Activated CD4-positive, alpha-beta memory T cell treated with anti-CD3 and anti-CD28 coated beads for 36 hours (primary cell): ENCODE measurements at regions of chr19 and their contacts with region 1.

Region 1: DNA sequence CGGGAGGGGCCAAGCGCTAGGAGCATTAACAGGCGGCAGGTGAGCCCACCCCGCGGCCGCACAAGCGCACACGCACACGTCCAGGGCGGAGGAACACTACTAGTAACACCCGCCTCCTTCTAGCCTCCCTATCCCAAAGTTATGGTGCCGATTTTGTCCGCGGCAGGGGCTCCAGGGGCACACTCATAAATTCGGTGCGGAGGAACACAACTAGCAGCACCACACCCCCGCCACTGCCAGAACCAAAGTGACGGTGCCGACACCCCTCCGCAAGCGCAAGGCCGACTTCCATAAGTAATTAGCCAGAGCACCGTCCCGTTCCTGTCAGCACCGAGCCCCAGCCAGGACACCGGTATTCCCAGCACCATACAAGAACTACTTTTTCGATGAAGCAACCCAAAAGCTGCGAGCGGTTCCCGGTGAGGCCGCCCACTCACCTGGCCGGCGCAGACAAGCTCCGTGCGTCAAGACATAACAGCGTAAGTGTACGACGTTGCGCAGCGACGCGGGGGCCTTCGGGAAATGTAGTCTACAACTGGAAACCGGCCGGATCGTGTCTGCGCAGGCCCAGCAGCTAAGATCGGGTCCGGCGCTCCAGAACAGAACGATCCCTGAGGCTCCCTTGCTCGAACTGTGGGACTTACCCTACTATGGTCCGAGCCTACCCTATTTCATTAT is at the starts of genes ZNF540 and ZNF571:
- DNase-seq: peak; percentile 96
- H3K4me3 Mint-ChIP-seq: peak within 1 kb of the TSS; percentile 86
- H3K27ac Mint-ChIP-seq: peak within 1 kb of the TSS; percentile 100
- H3K4me1 Mint-ChIP-seq: peaks cover 31% of the 10 kb centered on the region
- H3K27me3 Mint-ChIP-seq: no peaks in the 10 kb centered on the region
- total RNA-seq, gene ZNF540: 0.86 to 1.1 TPM
- total RNA-seq, gene ZNF571: 2.7 to 4.0 TPM

Region 2: GRCh38 chr19:36378625-36379509 is 1215.6 kb before region 1 on chr19 and contains the start of gene ZFP14:
- CTCF ChIA-PET with region 1: no interaction called
- POLR2A ChIA-PET with region 1: no interaction called
- intact Hi-C with region 1: loop called (anchors 5 kb)
- DNase-seq: peak; percentile 97
- H3K4me3 Mint-ChIP-seq: peak within 1 kb of the TSS; percentile 91
- H3K27ac Mint-ChIP-seq: peak within 1 kb of the TSS; percentile 86
- H3K4me1 Mint-ChIP-seq: peaks cover 10% of the 10 kb centered on the region
- H3K27me3 Mint-ChIP-seq: no peaks in the 10 kb centered on the region
- total RNA-seq, gene ZFP14: 1.6 to 2.3 TPM

Region 3: GRCh38 chr19:36973021-36973843 is 621.2 kb before region 1 on chr19:
- CTCF ChIA-PET with region 1: interaction called, 3 read pairs
- POLR2A ChIA-PET with region 1: no interaction called
- intact Hi-C with region 1: loop called (anchors 2 kb)
- DNase-seq: peak; percentile 91
- H3K4me3 Mint-ChIP-seq: peak overlapping the region; percentile 89
- H3K27ac Mint-ChIP-seq: peak overlapping the region; percentile 95
- H3K4me1 Mint-ChIP-seq: peaks cover 7% of the 10 kb centered on the region
- H3K27me3 Mint-ChIP-seq: no peaks in the 10 kb centered on the region

Region 4: DNA sequence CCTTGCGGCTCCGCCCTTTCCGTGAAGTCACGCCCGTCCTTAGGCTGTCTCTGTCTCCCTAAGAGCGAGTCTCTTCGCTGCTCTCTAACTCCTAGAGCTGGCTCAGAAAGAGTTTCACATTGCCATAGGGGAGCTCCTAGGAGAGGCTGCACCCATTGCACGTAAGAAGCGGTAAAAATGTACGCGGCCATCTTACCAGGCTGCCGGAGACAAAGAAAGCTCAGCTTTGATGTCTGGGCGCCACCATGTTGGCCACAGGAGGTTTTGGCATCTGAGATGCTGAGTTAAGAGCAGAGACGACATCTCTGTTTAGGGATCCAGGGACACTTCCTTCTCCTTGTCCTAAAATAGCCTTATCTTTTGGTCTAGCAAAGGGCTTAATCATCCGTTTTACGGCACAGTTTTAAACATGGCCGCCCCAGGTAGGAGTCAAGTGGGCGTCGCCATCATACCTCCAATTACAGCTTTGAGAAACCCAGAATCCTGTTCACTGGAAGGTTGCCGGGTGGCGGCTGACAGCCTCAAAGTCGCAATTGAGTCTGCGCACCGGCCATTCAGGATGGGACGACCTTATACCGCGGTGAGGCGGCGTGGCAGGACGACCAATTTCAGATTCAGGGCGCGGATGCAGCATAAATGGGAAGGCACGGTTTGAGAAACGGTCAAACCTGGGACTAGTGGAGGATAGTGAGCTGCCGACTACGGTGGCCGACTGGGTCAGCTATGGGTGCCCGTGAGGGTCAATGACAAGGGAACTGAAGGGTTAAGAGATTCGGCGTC is 87.9 kb before region 1 on chr19 and contains the start of gene ZNF793:
- CTCF ChIA-PET with region 1: interaction called, 4 read pairs
- POLR2A ChIA-PET with region 1: interaction called, 9 read pairs
- intact Hi-C with region 1: loop called (anchors 1 kb)
- DNase-seq: peak; percentile 86
- H3K4me3 Mint-ChIP-seq: no peak within 1 kb of the TSS
- H3K27ac Mint-ChIP-seq: no peak within 1 kb of the TSS
- H3K4me1 Mint-ChIP-seq: no peaks in the 10 kb centered on the region
- H3K27me3 Mint-ChIP-seq: no peaks in the 10 kb centered on the region
- total RNA-seq, gene ZNF793: 2.4 to 3.4 TPM

Region 5: DNA sequence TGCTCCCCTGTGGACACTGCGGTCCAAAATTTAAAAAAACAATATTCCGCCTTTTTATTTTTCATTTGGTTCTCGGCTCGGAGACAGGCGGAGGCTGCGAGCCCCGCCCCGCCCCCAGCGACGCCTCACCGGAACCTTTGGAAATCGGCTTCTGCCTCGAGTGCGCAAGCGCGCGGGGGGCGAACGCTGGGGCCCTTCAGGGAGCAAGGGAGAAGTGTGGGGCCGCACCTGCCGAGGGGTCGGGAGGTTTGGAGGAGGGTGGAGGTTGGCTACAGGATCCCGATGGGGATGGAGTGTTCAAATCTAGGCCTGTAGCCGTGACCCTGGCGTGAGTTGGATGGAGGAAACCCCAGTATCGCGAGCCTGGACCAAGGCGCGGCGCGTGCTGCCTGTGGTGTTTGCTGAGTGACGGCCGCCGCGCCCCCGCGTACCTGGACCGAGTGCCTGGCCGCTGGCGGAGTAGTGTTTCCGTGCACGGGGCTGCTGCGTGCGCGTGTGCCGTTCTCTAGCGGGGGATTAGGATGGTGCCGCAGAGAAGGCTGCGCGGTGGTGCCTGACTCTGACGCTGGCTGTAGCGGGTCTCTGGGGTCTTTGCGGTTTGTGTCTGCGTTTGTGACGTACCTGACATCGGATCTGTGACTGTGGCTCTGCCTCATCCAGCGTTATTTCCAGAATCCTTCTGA is 61.4 kb after region 1 on chr19:
- CTCF ChIA-PET with region 1: interaction called, 5 read pairs
- POLR2A ChIA-PET with region 1: interaction called, 4 read pairs
- intact Hi-C with region 1: loop called (anchors 1 kb)
- DNase-seq: peak; percentile 90
- H3K4me3 Mint-ChIP-seq: peak overlapping the region; percentile 91
- H3K27ac Mint-ChIP-seq: peak overlapping the region; percentile 95
- H3K4me1 Mint-ChIP-seq: peaks cover 27% of the 10 kb centered on the region
- H3K27me3 Mint-ChIP-seq: no peaks in the 10 kb centered on the region

Region 6: DNA sequence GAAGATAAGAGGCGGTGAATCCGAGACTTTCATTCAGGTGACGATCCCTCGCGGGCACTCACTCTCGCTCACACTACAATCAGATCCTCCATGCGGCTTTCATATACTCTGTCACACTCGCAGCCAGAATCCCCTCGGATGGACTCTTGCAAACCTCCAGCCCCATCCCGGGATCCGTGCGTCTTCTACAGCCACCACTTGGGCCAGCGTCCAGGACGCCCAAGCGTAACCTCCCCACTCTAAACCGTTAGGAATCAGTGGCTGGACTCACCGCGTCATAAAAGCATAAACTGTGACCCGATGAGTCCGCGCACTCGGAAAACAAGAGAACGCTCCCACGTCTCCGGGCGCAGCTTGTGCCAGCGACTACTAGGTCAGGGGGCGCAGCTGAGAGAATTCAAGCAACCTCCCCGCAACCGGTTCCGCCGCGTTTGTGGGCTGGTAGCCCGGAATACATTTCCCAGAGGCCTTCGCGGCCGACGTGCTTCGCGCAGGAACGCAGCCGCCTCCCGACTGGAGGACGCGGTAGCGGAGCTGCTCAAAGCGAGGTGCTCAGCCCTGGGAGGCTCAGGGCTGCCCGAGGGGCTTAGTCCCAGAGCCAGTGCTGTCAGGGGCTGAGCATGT is 97.5 kb after region 1 on chr19:
- CTCF ChIA-PET with region 1: no interaction called
- POLR2A ChIA-PET with region 1: interaction called, 5 read pairs
- intact Hi-C with region 1: loop called (anchors 2 kb)
- DNase-seq: peak; percentile 89
- H3K4me3 Mint-ChIP-seq: peak overlapping the region; percentile 87
- H3K27ac Mint-ChIP-seq: peak overlapping the region; percentile 77
- H3K4me1 Mint-ChIP-seq: peaks cover 9% of the 10 kb centered on the region
- H3K27me3 Mint-ChIP-seq: no peaks in the 10 kb centered on the region

Region 7: DNA sequence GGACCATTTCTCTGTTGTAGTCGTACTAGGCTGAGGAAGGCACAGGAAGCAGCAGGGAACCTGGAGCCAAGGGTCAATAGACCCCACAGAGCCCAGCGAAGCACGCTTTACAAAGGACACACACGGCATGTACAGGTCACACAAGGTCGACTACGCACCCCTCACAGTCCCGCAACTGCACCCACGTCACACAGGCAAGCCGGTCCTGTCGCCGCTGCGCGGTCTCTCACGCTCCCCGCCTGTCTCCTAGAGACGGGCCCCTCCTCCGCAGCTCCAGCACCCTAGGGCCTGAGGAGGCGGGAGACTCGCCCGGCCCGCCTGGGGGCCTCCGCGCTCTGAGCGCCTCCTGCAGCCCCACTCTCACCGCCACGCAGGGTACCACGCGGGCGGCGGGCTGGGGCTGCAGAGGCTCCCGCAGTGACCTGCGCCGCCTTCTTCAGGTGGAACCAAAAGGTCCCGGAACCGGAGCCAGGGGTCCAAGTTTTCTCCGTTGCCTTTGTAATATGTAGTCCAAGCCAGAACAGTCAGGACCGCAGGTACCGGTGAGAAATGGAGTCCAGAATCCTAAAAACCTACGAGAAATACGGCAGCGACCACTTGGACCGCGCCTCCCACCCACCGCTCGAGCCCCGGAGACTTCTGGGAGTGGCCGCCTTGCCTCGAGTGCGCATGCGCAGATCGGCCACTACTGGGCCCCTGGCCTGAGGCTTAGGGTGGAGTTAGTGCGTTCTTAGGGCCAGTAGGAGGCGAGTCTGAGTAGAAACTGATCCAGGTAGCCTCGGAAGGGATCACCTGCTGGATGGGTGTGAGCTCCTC is 124.9 kb after region 1 on chr19 and contains the start of gene ZNF607:
- CTCF ChIA-PET with region 1: no interaction called
- POLR2A ChIA-PET with region 1: no interaction called
- intact Hi-C with region 1: loop called (anchors 1 kb)
- DNase-seq: peak; percentile 92
- H3K4me3 Mint-ChIP-seq: peak within 1 kb of the TSS; percentile 89
- H3K27ac Mint-ChIP-seq: peak within 1 kb of the TSS; percentile 82
- H3K4me1 Mint-ChIP-seq: peaks cover 13% of the 10 kb centered on the region
- H3K27me3 Mint-ChIP-seq: no peaks in the 10 kb centered on the region
- total RNA-seq, gene ZNF607: 5.3 to 7.0 TPM